ENCODE measurements at regions of chr2 and their contacts with region 1.

Region 1: DNA sequence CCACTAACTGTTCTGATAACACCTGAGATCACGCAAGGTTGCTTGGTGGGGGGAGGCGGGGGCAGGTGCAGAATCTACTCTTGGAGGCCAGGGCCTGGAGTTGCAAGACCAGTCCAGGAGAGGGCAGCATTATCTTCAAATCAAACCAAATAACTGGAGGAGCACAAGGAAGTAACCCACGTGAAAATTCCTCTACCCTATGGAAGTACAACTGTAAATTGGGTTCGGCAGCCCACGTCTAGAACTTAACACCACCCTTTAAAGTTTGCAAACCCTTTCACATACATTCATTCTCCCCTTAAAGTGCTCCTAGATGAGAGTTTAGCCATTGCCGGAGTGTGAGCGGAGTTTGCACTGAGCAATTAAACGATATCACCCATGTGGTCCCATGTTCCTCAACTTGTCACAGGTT is 19.6 kb upstream of the CXCR1 start:
- DNase-seq: peak; percentile 83 to 91
- H3K4me3 ChIP-seq: no peak overlapping the region
- H3K27ac ChIP-seq: peak overlapping the region; percentile 67 to 92 (median 83)
- H3K4me1 ChIP-seq: peaks cover 9 to 30% (median 21%) of the 10 kb centered on the region in 4 donors
- H3K27me3 ChIP-seq: no peaks in the 10 kb centered on the region
- CTCF ChIP-seq: peak in 5 of 7 experiments; percentile 85 to 93 (median 93)
- EP300 ChIP-seq: no peak
- POLR2A ChIP-seq: no peak

Region 2: DNA sequence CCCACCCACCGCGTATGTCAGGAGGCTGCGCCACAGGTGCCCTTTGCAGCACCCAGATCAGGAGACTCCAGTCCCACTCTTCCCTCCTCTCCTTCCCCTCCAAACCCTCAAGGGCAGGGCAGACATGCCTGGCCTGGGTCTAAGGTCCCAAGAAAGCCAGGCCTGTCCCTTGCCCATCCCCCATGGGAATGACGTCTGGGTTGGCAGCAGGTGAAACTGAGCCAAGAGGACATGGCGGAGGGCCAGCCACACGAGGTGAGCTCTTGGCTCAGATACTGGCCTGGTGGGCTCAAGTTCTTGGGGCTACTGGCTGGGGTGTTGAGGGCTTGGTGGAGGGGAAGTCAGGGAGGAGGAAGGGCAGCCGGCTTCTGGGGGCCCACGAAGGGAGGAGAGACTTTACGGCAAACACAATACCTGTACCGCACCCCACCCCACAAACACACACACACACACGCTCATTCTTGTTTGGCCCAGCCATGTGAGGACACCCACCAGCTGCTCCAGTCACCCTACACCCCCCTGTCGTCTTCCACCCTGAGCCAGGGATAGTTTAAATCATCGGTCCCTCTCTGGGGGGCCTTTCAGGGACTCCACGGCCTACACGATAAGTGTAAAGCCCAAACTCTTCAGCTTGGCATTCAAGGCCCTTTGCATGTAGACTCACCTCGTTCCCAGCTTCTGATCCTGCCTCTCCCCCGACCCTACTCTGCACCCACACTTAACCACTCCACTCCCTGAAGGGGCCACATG is 159.5 kb before region 1 on chr2:
- intact Hi-C with region 1: no loop called
- DNase-seq: peak in 1 of 2 donors; percentile 95
- H3K4me3 ChIP-seq: no peak overlapping the region
- H3K27ac ChIP-seq: peak overlapping the region in 2 of 5 donors; percentile 41 to 46
- H3K4me1 ChIP-seq: peaks cover 18 to 47% (median 42%) of the 10 kb centered on the region in 4 donors
- H3K27me3 ChIP-seq: no peaks in the 10 kb centered on the region
- CTCF ChIP-seq: no peak
- EP300 ChIP-seq: no peak
- POLR2A ChIP-seq: no peak

Region 3: DNA sequence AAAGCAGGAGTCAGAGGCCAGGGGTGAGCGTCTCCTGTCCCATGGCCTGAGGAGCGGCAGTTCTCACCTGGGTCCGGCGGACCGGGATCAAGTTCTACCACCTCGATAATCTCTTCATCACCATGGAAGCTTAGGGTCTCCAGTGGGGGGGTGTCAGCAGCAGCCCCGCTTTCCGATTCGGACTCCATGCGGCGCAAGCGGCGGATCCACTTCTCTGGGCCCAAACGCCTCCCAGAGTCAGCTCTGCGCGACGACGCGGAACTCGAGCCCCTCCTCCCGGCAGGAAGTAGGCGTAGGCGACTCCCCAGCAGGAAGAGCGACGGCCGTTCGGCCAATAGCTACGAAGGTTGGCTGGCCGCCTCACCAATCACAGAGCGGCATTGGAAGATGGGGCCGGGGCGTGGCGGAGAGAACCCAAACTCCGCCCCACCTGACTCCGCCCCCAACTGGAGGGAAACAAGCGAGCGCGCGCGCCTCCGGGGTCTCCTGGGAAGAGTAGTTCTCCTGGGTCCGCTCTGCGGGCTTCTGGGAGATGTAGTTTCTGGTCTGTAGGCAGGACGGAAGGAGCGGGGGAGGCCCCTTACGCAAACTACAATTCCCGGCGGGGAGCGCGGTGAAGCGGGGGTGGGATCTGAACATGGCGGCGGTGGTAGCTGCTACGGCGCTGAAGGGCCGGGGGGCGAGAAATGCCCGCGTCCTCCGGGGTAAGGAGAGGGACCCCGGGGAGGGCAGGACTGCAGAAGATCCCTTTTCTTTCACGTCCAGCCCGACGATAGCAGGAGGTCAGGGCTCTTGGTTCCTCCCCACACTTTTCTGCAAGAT is 83.7 kb after region 1 on chr2 and contains the starts of genes AAMP and PNKD:
- intact Hi-C with region 1: loop called (anchors 10 kb)
- DNase-seq: peak; percentile 100
- H3K4me3 ChIP-seq: peak within 1 kb of the TSS; percentile 73 to 88 (median 82)
- H3K27ac ChIP-seq: peak within 1 kb of the TSS; percentile 82 to 99 (median 89)
- H3K4me1 ChIP-seq: peaks cover 40 to 88% (median 82%) of the 10 kb centered on the region in 4 donors
- H3K27me3 ChIP-seq: no peaks in the 10 kb centered on the region
- CTCF ChIP-seq: peak in 2 of 7 experiments; percentile 22 to 41
- EP300 ChIP-seq: no peak
- POLR2A ChIP-seq: peak in 2 of 4 donors; percentile 19 to 42
- total RNA-seq, gene AAMP: 82.6 to 218 (median 173) TPM
- total RNA-seq, gene PNKD: 35.1 to 121 (median 76.9) TPM

Region 4: GRCh38 chr2:218312267-218312756 is 126.0 kb after region 1 on chr2:
- intact Hi-C with region 1: no loop called
- DNase-seq: peak; percentile 79 to 90
- H3K4me3 ChIP-seq: no peak overlapping the region
- H3K27ac ChIP-seq: peak overlapping the region; percentile 75 to 88 (median 85)
- H3K4me1 ChIP-seq: peaks cover 7 to 36% (median 23%) of the 10 kb centered on the region in 4 donors
- H3K27me3 ChIP-seq: no peaks in the 10 kb centered on the region
- CTCF ChIP-seq: no peak
- EP300 ChIP-seq: no peak
- POLR2A ChIP-seq: no peak

Region 5: GRCh38 chr2:218418717-218419458 is 232.5 kb after region 1 on chr2 and contains the start of gene VIL1:
- intact Hi-C with region 1: no loop called
- DNase-seq: peak in 1 of 2 donors; percentile 89
- H3K4me3 ChIP-seq: no peak within 1 kb of the TSS
- H3K27ac ChIP-seq: no peak within 1 kb of the TSS
- H3K4me1 ChIP-seq: peaks cover 0 to 9% (median 3%) of the 10 kb centered on the region in 4 donors
- H3K27me3 ChIP-seq: no peaks in the 10 kb centered on the region
- CTCF ChIP-seq: no peak
- EP300 ChIP-seq: no peak
- POLR2A ChIP-seq: no peak
- total RNA-seq, gene VIL1: 0.43 to 120 (median 12.7) TPM in 4 of 5 donors, not detected in the other

Measured in stomach (tissue), 19 donors.